WTC11 (cell line): ENCODE measurements at regions of chr6 and their contacts with region 1.

Region 1: GRCh38 chr6:31441365-31442267 is 38.2 kb downstream of the MICA start:
- DNase-seq: peak; percentile 91
- ATAC-seq: peak; percentile 87
- H3K4me3 Mint-ChIP-seq: no peak overlapping the region
- H3K27ac Mint-ChIP-seq: no peak overlapping the region
- H3K4me1 Mint-ChIP-seq: peaks cover 13% of the 10 kb centered on the region
- H3K27me3 Mint-ChIP-seq: peaks cover 39% of the 10 kb centered on the region
- CTCF ChIP-seq: peak; percentile 71

Region 2: DNA sequence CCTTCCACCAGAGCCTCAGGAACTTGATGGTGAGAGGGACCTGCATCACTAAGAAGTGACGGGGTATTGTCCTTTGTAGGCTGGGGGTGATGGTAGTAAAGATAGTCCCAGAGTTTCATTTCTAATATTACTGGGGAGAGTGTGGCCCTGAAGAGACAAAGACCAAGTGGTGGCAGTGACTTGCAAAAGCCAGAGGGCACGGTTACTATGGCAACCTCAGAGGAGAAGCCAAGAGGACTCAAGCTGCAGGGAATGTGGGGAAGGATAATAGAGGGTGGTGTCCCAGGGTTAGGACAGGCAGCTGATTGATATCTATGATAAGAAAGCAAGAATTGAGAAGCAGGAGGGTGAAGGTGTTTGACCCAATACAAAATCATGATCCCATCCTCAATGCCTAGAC is 1571.5 kb before region 1 on chr6:
- CTCF ChIA-PET with region 1: no interaction called
- POLR2A ChIA-PET with region 1: no interaction called
- DNase-seq: no peak
- ATAC-seq: no peak
- H3K4me3 Mint-ChIP-seq: no peak overlapping the region
- H3K27ac Mint-ChIP-seq: no peak overlapping the region
- H3K4me1 Mint-ChIP-seq: no peaks in the 10 kb centered on the region
- H3K27me3 Mint-ChIP-seq: peaks cover 86% of the 10 kb centered on the region
- CTCF ChIP-seq: no peak

Region 3: DNA sequence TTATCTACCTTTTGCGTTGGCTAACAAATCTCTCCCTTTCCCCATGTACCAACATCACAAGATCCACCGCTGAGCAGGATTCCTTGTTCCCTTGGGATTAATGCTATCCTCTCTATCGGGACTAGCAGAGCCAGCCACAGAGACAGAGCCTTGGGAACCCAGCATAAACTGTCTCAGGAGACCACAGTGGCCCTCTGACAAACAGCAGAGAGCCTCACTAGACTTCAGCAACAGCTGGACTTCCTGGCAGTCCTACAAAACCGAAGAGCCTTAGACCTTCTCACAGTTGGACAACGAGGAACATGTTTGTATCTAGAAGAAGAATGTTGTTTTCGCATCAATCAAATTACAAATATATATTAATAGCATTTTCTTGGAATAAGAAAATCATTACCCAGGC is 231.5 kb before region 1 on chr6:
- CTCF ChIA-PET with region 1: interaction called, 11 read pairs
- POLR2A ChIA-PET with region 1: no interaction called
- DNase-seq: no peak
- ATAC-seq: no peak
- H3K4me3 Mint-ChIP-seq: no peak overlapping the region
- H3K27ac Mint-ChIP-seq: peak overlapping the region; percentile 16; the same call in 1 of the 2 replicates
- H3K4me1 Mint-ChIP-seq: peaks cover 23% of the 10 kb centered on the region
- H3K27me3 Mint-ChIP-seq: no peaks in the 10 kb centered on the region
- CTCF ChIP-seq: no peak

Region 4: GRCh38 chr6:31351401-31352309 is 90.0 kb before region 1 on chr6:
- CTCF ChIA-PET with region 1: no interaction called
- POLR2A ChIA-PET with region 1: no interaction called
- DNase-seq: no peak
- ATAC-seq: no peak
- H3K4me3 Mint-ChIP-seq: no peak overlapping the region
- H3K27ac Mint-ChIP-seq: no peak overlapping the region
- H3K4me1 Mint-ChIP-seq: peaks cover 14% of the 10 kb centered on the region
- H3K27me3 Mint-ChIP-seq: peaks cover 53% of the 10 kb centered on the region
- CTCF ChIP-seq: no peak

Region 5: GRCh38 chr6:31403283-31403989 is 38.2 kb before region 1 on chr6 and contains the start of gene MICA:
- CTCF ChIA-PET with region 1: interaction called, 181 read pairs
- POLR2A ChIA-PET with region 1: interaction called, 16 read pairs
- DNase-seq: peak; percentile 94
- ATAC-seq: peak; percentile 79
- H3K4me3 Mint-ChIP-seq: peak within 1 kb of the TSS; percentile 98
- H3K27ac Mint-ChIP-seq: peak within 1 kb of the TSS; percentile 96
- H3K4me1 Mint-ChIP-seq: peaks cover 55% of the 10 kb centered on the region
- H3K27me3 Mint-ChIP-seq: peaks cover 24% of the 10 kb centered on the region
- CTCF ChIP-seq: no peak
- total RNA-seq, gene MICA: 11.4 to 12.9 TPM (median 11.7 TPM) in 3 replicates

Region 6: DNA sequence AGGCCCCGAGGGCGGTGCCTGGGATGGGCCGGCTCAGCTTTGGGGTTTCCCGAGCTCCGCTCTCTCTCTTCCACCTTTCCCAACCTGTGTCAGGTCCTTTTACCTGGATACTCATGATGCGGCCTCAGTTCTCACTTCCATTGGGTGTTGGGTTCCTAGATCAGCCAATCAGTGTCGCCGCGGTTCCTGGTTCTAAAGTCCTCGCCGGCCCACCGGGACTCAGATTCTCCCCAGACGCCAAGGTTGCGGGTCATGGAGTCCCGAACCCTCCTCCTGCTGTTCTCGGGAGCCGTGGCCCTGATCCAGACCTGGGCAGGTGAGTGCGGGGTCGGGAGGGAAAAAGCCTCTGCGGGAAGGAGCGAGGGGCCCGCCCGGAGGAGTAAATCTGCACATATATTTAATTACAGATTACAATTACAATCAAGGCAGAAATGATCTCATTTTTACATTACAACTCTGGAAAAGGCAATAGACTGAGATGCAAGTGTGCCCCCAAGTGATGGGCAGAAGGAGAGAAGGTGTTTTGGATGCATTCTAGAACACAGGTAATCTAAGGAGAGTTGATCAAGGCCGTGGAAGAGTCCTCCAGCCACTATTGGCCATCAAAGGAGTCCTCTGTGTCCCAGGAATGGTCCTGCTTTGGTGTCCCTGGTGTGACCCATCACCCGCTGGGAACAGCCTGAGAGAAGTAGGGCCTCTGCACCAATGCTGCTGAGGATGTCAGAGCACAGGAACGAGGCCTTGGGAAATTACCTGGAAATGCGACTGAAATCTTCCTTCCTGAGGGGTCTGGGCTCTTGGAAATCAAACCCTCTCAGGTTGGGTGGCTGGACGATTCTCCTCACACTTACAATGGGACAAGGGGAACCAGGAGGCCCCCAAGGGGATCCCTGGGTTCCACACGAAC is 21.6 kb after region 1 on chr6:
- CTCF ChIA-PET with region 1: interaction called, 47 read pairs
- POLR2A ChIA-PET with region 1: interaction called, 5 read pairs
- DNase-seq: peak; percentile 93
- ATAC-seq: peak; percentile 99
- H3K4me3 Mint-ChIP-seq: peak overlapping the region; percentile 79
- H3K27ac Mint-ChIP-seq: no peak overlapping the region
- H3K4me1 Mint-ChIP-seq: peaks cover 10% of the 10 kb centered on the region
- H3K27me3 Mint-ChIP-seq: peaks cover 45% of the 10 kb centered on the region
- CTCF ChIP-seq: no peak

Region 7: DNA sequence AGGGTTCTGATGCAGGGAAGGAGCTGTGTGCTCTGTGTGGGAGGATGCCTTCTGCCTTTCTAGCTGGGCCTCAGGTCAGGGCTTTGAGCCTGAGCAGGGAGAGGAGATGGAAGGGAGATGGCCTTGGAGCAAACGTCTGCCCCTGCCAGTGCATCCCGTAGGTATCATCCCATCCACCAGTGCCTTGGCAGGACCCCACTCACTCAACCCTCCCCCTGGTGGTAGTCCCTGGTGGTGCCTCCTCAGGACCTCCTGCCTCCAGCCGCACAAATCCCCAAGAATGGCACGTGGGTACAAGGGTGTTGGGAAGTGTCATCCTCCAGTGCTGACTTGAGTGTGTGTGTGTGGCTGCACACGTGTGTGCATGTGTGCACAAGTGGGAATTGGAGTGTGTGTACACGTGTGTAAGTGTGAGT is 33.3 kb after region 1 on chr6:
- CTCF ChIA-PET with region 1: interaction called, 21 read pairs
- POLR2A ChIA-PET with region 1: no interaction called
- DNase-seq: peak; percentile 74
- ATAC-seq: peak; percentile 81
- H3K4me3 Mint-ChIP-seq: no peak overlapping the region
- H3K27ac Mint-ChIP-seq: no peak overlapping the region
- H3K4me1 Mint-ChIP-seq: peaks cover 3% of the 10 kb centered on the region; the same call in 1 of the 2 replicates
- H3K27me3 Mint-ChIP-seq: peaks cover 15% of the 10 kb centered on the region
- CTCF ChIP-seq: peak; percentile 69

Region 8: GRCh38 chr6:31493875-31494694 is 52.5 kb after region 1 on chr6:
- CTCF ChIA-PET with region 1: interaction called, 15 read pairs
- POLR2A ChIA-PET with region 1: no interaction called
- DNase-seq: peak; percentile 92
- ATAC-seq: peak; percentile 67
- H3K4me3 Mint-ChIP-seq: peak overlapping the region; percentile 91
- H3K27ac Mint-ChIP-seq: peak overlapping the region; percentile 91
- H3K4me1 Mint-ChIP-seq: peaks cover 57% of the 10 kb centered on the region
- H3K27me3 Mint-ChIP-seq: peaks cover 30% of the 10 kb centered on the region
- CTCF ChIP-seq: peak; percentile 73